Psoas muscle (tissue), 8 donors: ENCODE measurements at regions of chr1 and their contacts with region 1.

Region 1: DNA sequence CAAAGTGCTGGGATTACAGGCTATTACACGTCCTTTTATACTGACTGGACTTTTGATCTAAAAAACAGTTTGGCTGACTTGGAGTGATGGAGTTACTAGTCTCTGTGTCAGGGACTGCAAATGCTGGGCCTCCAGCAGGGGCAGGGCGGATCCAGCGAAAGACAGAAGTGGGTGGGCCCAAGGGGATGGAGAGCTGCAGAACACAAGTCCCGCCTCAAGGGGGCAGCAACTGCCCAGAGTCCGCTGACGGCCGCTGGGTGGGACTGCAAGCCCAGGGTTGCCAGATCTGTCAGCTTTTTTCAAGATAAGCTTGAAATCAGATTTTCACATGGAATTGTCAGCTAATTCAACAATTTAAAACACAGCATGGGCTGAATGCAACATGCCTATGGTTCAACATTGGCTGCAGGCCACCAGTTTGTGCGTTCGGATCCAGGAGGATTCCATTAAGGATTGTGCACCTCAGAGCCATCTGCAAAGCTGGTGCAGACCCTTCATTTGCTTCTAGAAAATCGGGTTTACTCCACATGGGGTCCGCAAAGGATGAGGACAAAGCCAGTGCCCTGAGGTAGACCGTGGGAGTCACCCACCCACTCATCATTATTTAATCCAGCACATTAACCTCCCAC is 10.7 kb downstream of the STMN1 start:
- DNase-seq: peak; percentile 90 to 95
- ATAC-seq: peak; percentile 95 to 99 (median 98)
- H3K4me3 ChIP-seq: peak overlapping the region; percentile 32
- H3K27ac ChIP-seq: peak overlapping the region; percentile 42
- H3K4me1 ChIP-seq: peaks cover 17% of the 10 kb centered on the region
- H3K27me3 ChIP-seq: no peaks in the 10 kb centered on the region
- CTCF ChIP-seq: peak; percentile 97

Region 2: GRCh38 chr1:25727635-25728330 is 167.7 kb before region 1 on chr1:
- intact Hi-C with region 1: no loop called
- DNase-seq: peak; percentile 64 to 79
- ATAC-seq: peak; percentile 45 to 70 (median 64)
- H3K4me3 ChIP-seq: no peak overlapping the region
- H3K27ac ChIP-seq: peak overlapping the region; percentile 53
- H3K4me1 ChIP-seq: peaks cover 27% of the 10 kb centered on the region
- H3K27me3 ChIP-seq: no peaks in the 10 kb centered on the region
- CTCF ChIP-seq: no peak

Region 3: DNA sequence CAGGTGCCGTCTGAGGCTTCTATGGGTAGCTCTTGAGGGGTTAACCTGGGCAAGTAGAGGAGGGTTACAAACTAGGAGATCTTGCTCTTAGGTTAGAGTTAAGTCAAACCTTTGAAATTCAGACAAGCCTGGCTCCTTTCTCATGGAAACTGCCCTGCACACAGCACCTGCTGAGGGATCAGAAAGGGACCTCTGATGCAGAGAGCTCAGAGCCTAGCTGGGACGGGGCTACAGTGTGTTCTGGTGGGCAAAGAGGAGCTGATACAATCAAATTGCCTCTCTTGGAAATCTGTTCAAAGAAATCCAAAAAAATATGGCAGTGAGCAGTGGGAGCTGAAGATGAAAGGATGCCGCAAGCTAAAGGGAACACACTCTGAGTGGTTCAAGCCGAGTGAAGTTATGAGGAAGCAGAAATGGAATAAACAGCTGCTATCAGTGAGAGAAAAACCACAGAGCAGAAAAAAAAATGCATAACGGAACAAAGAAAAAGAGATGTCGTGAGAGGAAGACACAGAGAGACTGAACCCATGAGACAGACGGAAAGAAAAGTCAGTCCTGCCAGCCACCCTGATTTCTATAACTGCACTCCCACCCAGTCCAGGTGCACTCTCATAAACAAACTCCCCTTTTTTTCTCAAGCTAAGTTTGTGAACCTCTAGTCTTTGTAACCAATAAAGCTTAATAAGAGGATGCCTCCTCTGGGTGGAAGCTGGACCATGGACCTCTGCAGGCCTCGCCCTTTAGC is 75.8 kb after region 1 on chr1:
- intact Hi-C with region 1: no loop called
- DNase-seq: no peak
- ATAC-seq: no peak
- H3K4me3 ChIP-seq: no peak overlapping the region
- H3K27ac ChIP-seq: no peak overlapping the region
- H3K4me1 ChIP-seq: no peaks in the 10 kb centered on the region
- H3K27me3 ChIP-seq: no peaks in the 10 kb centered on the region
- CTCF ChIP-seq: no peak

Region 4: DNA sequence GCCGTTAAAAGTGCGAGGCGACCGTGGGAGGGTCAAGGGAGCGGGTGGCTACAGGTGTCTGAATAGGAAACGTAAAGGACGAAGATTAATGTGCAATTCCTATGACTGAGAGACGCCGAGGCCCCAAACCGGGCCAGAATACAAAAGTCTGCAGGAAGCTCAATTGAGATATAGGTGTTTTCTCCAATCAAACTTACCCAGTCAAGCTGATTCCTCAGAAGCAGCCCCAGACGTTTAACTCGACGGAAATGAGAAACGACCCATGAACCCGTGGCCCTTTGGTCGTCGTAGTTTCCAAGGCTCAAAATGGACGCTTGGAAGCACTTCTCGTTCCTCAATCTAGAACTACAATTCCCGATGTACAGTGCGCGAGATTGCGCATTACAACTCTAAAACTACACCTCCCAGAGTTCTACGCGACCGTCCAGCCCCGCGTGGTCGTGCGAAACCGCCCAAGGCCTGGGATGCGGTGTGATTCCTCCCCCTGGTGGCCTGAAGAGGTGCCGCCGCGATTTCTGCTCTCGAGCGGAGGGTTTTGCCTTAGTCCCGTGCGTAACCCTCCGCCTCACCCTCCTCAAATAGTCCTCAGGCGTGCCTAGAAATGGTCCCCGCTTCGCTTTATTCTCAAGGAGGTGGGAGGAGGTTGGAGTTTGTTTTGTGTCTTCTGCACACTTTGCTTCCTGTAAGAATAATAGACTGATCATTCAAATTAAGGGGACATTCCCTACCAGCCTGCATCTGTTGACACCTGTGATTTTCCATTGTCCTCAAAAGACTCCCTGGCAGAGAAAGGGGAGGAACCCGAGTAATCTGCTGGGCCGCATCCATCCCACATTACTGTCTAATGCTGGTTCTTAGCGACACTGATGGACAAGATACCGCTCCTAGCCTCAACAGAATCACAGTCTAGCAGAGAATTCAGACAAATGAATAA is 102.6 kb after region 1 on chr1 and contains the start of gene PAFAH2:
- intact Hi-C with region 1: loop called (anchors 1 to 5 kb)
- DNase-seq: peak; percentile 96 to 99
- ATAC-seq: peak; percentile 95 to 98 (median 96)
- H3K4me3 ChIP-seq: peak within 1 kb of the TSS; percentile 73
- H3K27ac ChIP-seq: peak within 1 kb of the TSS; percentile 86
- H3K4me1 ChIP-seq: peaks cover 34% of the 10 kb centered on the region
- H3K27me3 ChIP-seq: no peaks in the 10 kb centered on the region
- CTCF ChIP-seq: peak; percentile 97
- total RNA-seq, gene PAFAH2: 5.5 to 15.8 (median 13.3) TPM

Region 5: DNA sequence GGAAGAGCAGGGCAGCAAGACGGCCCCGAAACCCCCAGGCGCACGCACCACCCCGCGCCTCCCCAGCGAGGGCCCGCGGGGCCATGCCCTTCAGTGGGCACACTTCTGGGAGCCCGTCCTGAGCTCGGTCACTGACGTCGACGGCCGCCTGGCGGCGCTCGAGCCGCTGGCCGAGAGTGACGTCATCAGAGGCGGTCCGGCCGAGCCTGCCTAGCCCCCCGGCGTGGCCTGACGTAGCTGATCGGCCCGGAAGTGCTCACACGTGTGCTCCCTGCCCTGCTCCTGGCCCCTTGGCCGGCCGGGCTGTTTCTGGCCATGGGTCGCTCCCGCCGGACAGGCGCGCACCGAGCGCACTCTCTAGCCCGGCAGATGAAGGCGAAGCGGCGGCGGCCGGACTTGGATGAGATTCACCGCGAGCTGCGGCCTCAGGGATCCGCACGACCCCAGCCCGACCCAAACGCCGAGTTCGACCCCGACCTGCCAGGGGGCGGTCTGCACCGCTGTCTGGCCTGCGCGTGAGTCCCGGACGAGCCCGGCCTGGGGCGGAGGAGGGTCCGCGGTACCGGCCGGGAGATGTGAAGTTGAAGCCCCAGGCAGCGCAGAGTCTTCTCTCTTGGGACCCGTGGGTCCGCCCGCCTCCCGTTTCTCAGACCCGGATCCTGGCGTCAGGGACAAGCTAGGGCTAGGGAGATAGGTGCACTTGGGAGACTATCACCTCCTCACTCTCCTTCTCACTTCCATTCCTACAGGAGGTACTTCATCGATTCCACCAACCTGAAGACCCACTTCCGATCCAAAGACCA is 274.4 kb after region 1 on chr1 and contains the start of gene ZNF593:
- intact Hi-C with region 1: loop called in 1 of 2 experiments (anchors 10 kb)
- DNase-seq: peak; percentile 93 to 97
- ATAC-seq: peak; percentile 94 to 97 (median 96)
- H3K4me3 ChIP-seq: peak within 1 kb of the TSS; percentile 77
- H3K27ac ChIP-seq: peak within 1 kb of the TSS; percentile 90
- H3K4me1 ChIP-seq: peaks cover 17% of the 10 kb centered on the region
- H3K27me3 ChIP-seq: no peaks in the 10 kb centered on the region
- CTCF ChIP-seq: peak; percentile 90
- total RNA-seq, gene ZNF593: 75.2 to 116 (median 78.3) TPM